Mammary epithelial cell (primary cell): ENCODE measurements at regions of chr7 and their contacts with region 1.

Region 1: DNA sequence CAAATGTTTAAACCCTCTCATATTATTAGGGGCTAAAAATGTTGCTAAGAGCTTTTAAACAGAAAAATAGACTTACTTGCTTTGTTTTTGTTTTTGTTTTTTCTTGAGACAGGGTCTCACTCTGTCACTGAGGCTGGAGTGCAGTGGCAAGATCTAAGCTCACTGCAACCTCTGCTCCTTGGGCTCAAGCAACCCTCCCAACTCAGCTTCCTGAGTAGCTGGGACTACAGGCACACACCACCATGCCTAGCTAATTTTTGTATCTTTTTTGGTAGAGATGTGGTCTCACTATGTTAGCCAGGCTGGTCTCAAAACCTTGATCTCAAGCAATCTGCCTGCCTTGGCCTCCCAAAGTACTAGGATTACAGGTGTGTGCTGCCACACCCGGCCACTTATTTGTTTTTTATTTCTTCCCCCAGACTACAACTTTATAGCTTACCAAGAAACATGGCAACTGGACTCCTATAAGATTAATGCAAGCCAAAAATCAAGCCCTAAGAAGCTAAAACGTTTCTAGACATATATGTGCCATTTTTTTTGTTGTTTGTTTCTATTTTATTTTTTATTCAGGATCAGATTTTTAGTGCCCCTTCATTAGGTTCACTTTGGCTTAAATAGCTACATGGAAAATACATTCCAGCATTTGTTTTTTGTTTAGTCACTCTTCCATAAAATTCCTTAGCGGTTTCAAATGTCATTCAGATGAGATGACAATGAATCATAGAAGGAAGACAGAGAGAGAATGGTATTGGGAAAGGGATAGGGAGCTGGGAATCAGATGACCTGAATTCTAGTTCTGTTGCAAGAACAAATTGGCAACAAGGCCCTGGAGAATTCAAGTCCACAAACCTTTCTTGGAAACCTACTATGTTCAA is 163.4 kb upstream of the MKLN1 start:
- DNase-seq: peak; percentile 78
- H3K4me3 ChIP-seq: no peak overlapping the region
- H3K27ac ChIP-seq: peak overlapping the region; percentile 86
- H3K4me1 ChIP-seq: peaks cover 15% of the 10 kb centered on the region
- H3K27me3 ChIP-seq: no peaks in the 10 kb centered on the region
- CTCF ChIP-seq: no peak

Region 2: GRCh38 chr7:131124001-131124629 is 40.1 kb before region 1 on chr7:
- CTCF ChIA-PET with region 1: no interaction called
- dilution Hi-C with region 1: no loop called
- in situ Hi-C with region 1: no loop called
- intact Hi-C with region 1: no loop called
- DNase-seq: no peak
- H3K4me3 ChIP-seq: no peak overlapping the region
- H3K27ac ChIP-seq: no peak overlapping the region
- H3K4me1 ChIP-seq: no peaks in the 10 kb centered on the region
- H3K27me3 ChIP-seq: no peaks in the 10 kb centered on the region
- CTCF ChIP-seq: no peak

Region 3: GRCh38 chr7:131152766-131153165 is 11.5 kb before region 1 on chr7:
- CTCF ChIA-PET with region 1: interaction called, 13 read pairs
- dilution Hi-C with region 1: no loop called
- in situ Hi-C with region 1: no loop called
- intact Hi-C with region 1: no loop called
- DNase-seq: no peak
- H3K4me3 ChIP-seq: no peak overlapping the region
- H3K27ac ChIP-seq: no peak overlapping the region
- H3K4me1 ChIP-seq: peaks cover 5% of the 10 kb centered on the region
- H3K27me3 ChIP-seq: no peaks in the 10 kb centered on the region
- CTCF ChIP-seq: no peak